K562 (cell line): ENCODE measurements at regions of chr6 and their contacts with region 1.

Region 1: GRCh38 chr6:149934249-149935156 is 7.3 kb upstream of the ULBP2 start:
- DNase-seq: peak; percentile 61 to 80 (median 64)
- ATAC-seq: peak; percentile 66
- H3K4me3 ChIP-seq: no peak overlapping the region
- H3K27ac ChIP-seq: no peak overlapping the region
- H3K4me1 ChIP-seq: peaks cover 0 to 9% of the 10 kb centered on the region in 2 experiments; a peak in 2 of 5 replicates
- H3K27me3 ChIP-seq: peaks cover 32 to 46% of the 10 kb centered on the region in 2 experiments
- CTCF ChIP-seq: peak; percentile 73 to 95 (median 89)
- EP300 ChIP-seq: no peak
- POLR2A ChIP-seq: no peak
- RAD21 ChIP-seq: peak; percentile 95 to 96

Region 2: GRCh38 chr6:150004783-150005717 is 70.5 kb after region 1 on chr6:
- CTCF ChIA-PET with region 1: interaction called, 3 read pairs
- POLR2A ChIA-PET with region 1: no interaction called
- in situ Hi-C with region 1: loop called (anchors 5 kb)
- intact Hi-C with region 1: no loop called
- DNase-seq: peak; percentile 97 to 99 (median 99)
- ATAC-seq: peak; percentile 97
- H3K4me3 ChIP-seq: peak overlapping the region; percentile 52
- H3K27ac ChIP-seq: peak overlapping the region; percentile 40
- H3K4me1 ChIP-seq: peaks cover 10 to 32% of the 10 kb centered on the region in 2 experiments
- H3K27me3 ChIP-seq: peaks cover 0 to 14% of the 10 kb centered on the region in 2 experiments; a peak in 2 of 5 replicates
- CTCF ChIP-seq: no peak
- EP300 ChIP-seq: no peak
- POLR2A ChIP-seq: peak; percentile 71
- RAD21 ChIP-seq: no peak

Region 3: GRCh38 chr6:150016324-150017185 is 82.1 kb after region 1 on chr6:
- CTCF ChIA-PET with region 1: interaction called, 70 read pairs
- POLR2A ChIA-PET with region 1: interaction called, 3 read pairs
- in situ Hi-C with region 1: no loop called
- intact Hi-C with region 1: loop called (anchors 1 kb)
- DNase-seq: peak in 3 of 4 experiments; percentile 36 to 69 (median 63)
- ATAC-seq: peak; percentile 66
- H3K4me3 ChIP-seq: no peak overlapping the region
- H3K27ac ChIP-seq: no peak overlapping the region
- H3K4me1 ChIP-seq: peaks cover 18 to 21% of the 10 kb centered on the region in 2 experiments; a peak in 4 of 5 replicates
- H3K27me3 ChIP-seq: peaks cover 5 to 14% of the 10 kb centered on the region in 2 experiments; a peak in 4 of 5 replicates
- CTCF ChIP-seq: peak; percentile 62 to 74 (median 70)
- EP300 ChIP-seq: no peak
- POLR2A ChIP-seq: no peak
- RAD21 ChIP-seq: peak; percentile 94 to 95

Region 4: DNA sequence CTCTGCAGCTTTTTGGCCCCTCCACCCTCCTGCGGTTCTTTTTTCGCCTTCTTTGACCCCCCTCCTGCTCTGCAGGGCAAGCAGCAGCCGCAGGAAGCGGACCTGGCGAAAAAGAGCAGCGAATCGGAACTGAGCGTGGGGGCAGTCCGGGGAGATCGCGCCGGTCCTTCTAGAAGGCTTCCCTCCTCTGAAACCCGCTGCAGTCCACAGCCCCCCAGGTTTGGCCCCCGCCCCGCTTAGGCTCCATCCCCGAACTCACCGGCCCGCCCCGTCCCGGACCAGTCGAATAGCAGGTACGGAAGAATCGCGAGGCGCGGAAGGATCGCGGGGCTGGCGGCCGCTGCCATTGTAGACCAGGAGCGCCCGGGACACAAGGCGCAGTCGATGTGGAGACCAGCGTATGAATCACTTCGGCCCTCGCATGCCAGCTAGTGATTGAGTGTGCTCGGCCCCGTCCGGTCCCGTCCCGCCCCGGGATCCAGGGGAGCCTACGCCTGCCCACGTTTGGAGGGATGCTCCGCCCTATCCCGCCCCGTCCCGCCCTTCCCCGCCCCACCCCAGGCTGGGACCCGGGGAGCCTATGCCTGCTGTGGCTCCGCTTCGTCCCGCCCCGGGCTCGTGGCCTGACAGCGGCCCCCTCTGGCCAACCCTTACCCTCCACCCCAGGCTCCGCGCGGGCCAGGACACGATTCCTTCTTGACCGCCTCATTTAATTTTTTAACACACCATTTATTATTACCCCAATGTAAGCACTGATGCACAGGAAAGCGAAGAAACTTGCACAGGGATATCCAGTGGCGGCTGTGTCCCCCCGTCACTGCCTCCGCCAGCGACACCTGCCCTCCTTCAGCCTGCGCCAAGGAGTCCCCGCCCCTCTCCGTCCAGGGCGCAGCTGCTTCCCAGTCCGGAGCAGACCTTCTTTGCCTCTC is 134.5 kb after region 1 on chr6 and contains the start of gene ULBP3:
- CTCF ChIA-PET with region 1: interaction called, 4 read pairs
- POLR2A ChIA-PET with region 1: no interaction called
- in situ Hi-C with region 1: no loop called
- intact Hi-C with region 1: loop called (anchors 5 kb)
- DNase-seq: peak; percentile 64 to 86 (median 84)
- ATAC-seq: peak; percentile 88
- H3K4me3 ChIP-seq: peak within 1 kb of the TSS; percentile 28; the same call in 1 of the 2 replicates
- H3K27ac ChIP-seq: no peak within 1 kb of the TSS
- H3K4me1 ChIP-seq: peaks cover 5 to 24% of the 10 kb centered on the region in 2 experiments; a peak in 3 of 5 replicates
- H3K27me3 ChIP-seq: peaks cover 18 to 52% of the 10 kb centered on the region in 2 experiments
- CTCF ChIP-seq: peak; percentile 45 to 70 (median 50); a peak in 5 of 6 replicates
- EP300 ChIP-seq: no peak
- POLR2A ChIP-seq: no peak
- RAD21 ChIP-seq: peak in 1 of 2 experiments; percentile 18; a peak in 1 of 4 replicates
- polyA plus RNA-seq, gene ULBP3: not detected

Region 5: GRCh38 chr6:150267686-150268561 is 333.4 kb after region 1 on chr6:
- CTCF ChIA-PET with region 1: no interaction called
- POLR2A ChIA-PET with region 1: interaction called, 3 read pairs
- in situ Hi-C with region 1: no loop called
- intact Hi-C with region 1: loop called (anchors 10 kb)
- DNase-seq: peak; percentile 58 to 89 (median 75)
- ATAC-seq: peak; percentile 63
- H3K4me3 ChIP-seq: no peak overlapping the region
- H3K27ac ChIP-seq: peak overlapping the region; percentile 67
- H3K4me1 ChIP-seq: peaks cover 39 to 59% of the 10 kb centered on the region in 2 experiments
- H3K27me3 ChIP-seq: no peaks in the 10 kb centered on the region
- CTCF ChIP-seq: peak; percentile 42 to 51 (median 46); a peak in 5 of 6 replicates
- EP300 ChIP-seq: peak; percentile 95
- POLR2A ChIP-seq: peak; percentile 71
- RAD21 ChIP-seq: peak; percentile 60 to 71

Region 6: DNA sequence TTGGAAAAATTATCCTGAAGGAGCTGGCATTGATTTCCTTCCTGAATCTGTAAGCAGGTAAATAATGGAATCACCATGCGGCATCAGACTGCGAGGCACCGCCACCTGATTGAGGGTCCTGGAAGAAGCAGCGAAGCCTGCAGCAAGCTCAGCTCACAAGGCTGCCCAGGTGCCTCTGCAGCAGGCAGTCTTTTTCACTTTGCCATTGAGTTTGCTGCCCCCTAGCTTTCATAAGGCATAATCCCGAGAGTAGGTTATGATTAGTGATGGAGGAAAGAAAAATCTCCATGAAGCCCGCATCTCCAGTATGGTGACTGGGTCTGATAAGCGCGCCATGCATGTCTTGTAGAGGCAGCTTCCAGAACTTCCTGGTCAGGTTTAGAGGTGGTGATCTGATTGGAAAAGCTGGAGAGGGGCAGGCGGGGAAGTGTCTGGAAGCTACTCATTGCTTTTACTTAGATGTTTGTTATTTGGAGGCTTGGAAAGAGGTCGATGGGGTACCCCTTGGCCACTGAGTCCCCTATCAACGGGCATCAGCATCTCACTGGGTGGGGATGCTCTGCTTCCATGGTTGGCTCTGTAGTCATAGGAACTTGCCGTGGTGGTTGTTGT is 461.0 kb after region 1 on chr6:
- CTCF ChIA-PET with region 1: interaction called, 3 read pairs
- POLR2A ChIA-PET with region 1: no interaction called
- in situ Hi-C with region 1: no loop called
- intact Hi-C with region 1: loop called (anchors 5 kb)
- DNase-seq: peak; percentile 50 to 73 (median 62)
- ATAC-seq: peak; percentile 99
- H3K4me3 ChIP-seq: no peak overlapping the region
- H3K27ac ChIP-seq: no peak overlapping the region
- H3K4me1 ChIP-seq: no peaks in the 10 kb centered on the region
- H3K27me3 ChIP-seq: peaks cover 24 to 46% of the 10 kb centered on the region in 2 experiments; a peak in 4 of 5 replicates
- CTCF ChIP-seq: peak; percentile 83 to 88 (median 84)
- EP300 ChIP-seq: no peak
- POLR2A ChIP-seq: no peak
- RAD21 ChIP-seq: peak; percentile 92